ENCODE measurements at regions of chr10 and their contacts with region 1.

Region 1: GRCh38 chr10:110354322-110354766 is 49.6 kb upstream of the SMNDC1 start:
- DNase-seq: peak; percentile 51
- H3K4me3 ChIP-seq: no peak overlapping the region
- CTCF ChIP-seq: peak; percentile 87

Region 2: GRCh38 chr10:110210674-110211464 is 143.5 kb before region 1 on chr10:
- CTCF ChIA-PET with region 1: no interaction called
- POLR2A ChIA-PET with region 1: no interaction called
- DNase-seq: peak; percentile 92
- H3K4me3 ChIP-seq: peak overlapping the region; percentile 80
- CTCF ChIP-seq: no peak

Region 3: GRCh38 chr10:110336111-110336721 is 18.1 kb before region 1 on chr10:
- CTCF ChIA-PET with region 1: interaction called, 102 read pairs
- POLR2A ChIA-PET with region 1: interaction called, 9 read pairs
- DNase-seq: peak; percentile 95
- H3K4me3 ChIP-seq: peak overlapping the region; percentile 15
- CTCF ChIP-seq: peak; percentile 32

Region 4: DNA sequence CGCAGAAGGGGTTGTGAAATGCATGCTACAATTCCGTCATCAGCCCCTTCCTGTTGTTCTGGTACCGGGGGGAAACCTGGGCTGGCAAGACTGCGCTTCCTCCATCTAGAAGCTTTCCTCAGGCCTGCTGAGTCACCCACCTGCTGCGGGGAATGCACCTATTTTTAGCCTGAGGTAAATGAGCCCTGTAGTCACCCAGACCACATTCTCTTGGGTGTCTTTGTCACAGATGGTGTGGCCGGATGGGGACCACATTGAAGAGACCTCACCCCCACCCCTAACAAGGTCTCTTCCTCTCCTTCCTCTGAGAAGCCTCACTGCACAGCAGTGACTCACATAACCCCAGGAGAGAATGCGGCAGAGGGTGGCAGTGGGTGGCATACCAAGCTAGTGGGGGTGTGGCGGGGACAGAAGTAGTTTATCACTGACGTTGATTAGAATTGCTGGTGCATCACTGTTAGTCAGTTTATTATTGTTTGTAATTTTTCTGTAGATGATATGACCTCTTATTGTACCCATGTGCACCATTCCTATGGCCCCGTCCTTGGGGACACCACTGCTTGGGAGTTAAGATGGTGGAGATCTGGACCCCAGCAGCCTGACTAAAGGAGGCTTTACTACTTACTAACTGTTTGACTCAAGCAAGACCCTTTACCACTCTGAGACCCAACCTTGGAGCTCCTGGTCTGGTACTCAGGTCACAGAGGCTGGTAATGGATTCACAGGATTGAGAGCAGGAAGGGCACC is 60.4 kb after region 1 on chr10:
- CTCF ChIA-PET with region 1: interaction called, 35 read pairs
- POLR2A ChIA-PET with region 1: interaction called, 3 read pairs
- DNase-seq: no peak
- H3K4me3 ChIP-seq: no peak overlapping the region
- CTCF ChIP-seq: no peak

Region 5: DNA sequence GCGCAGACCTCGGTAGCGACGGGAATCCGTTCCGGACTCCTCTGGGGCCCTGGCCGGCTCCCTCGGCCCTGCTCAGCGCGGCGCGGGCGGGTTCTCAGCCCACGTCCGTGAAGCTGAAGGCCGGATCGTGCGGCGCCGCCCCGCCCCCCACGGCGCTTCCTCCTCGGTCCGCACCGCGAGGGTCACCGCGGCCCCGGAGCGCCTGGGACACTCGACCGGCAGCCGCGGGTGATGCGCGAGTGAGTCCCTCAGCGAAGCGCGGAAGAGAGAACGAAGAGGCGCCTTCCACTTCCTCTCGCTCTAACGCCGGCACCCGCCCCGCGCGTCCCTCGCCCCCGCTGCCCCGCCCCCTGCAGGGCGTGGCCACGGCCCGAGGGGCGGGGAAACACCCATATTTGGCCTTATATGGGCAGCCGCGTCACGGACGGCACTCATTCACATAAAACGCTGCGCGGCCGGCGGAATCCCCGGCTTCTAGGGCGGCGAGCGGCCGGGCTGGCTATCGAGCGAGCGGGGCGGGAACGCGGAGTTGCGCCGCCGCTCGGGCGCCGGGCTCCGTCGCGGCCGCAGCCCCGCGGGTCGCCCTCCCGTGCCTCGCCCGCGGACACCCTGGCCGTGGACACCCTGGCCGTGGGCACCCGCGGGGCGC is 143.2 kb after region 1 on chr10 and contains the start of gene DUSP5:
- CTCF ChIA-PET with region 1: interaction called, 106 read pairs
- POLR2A ChIA-PET with region 1: interaction called, 42 read pairs
- DNase-seq: no peak
- H3K4me3 ChIP-seq: peak within 1 kb of the TSS; percentile 83
- CTCF ChIP-seq: no peak